Activated T-helper 2 cell treated with anti-CD3 and anti-CD28 coated beads, Interferon-gamma antibody, Interleukin-2, Interleukin-4, amounts not matched to agents 10 μg/mL and 5 μg/mL and 100 μg/mL, durations not matched to agents 14 hours and 24 hours and 36 hours (primary cell): ENCODE measurements at regions of chr1 and their contacts with region 1.

Region 1: DNA sequence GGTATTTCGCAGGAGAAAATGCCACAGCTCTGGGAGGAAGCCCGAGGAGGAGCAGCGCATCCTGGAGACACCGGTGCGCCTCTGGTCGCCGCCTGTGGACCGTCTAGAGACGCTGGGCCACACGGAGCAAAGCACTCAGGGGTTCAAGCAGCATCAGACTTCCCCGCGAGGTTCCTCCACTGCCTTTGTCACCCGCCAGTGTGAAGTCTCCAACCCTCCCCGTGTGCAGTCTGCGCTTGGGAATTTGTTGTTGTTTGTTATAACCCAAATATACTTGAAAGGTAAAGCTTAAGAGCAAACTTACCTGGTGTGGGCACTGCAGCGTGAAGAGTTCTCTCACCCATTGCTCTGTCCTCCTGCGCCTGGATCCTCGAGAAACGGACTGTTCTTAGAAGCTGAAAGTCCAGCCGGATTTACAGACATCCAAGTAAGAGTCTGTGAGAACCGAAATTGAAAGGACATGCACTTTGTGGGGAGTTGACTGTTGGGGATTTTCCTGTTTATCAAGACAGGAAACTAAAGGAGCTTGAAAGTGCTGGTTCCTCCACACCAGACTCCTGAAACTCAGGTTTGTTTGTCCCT is at the start of gene GBP4:
- DNase-seq: peak; percentile 30
- H3K4me3 Mint-ChIP-seq: peak within 1 kb of the TSS; percentile 86
- H3K27ac Mint-ChIP-seq: peak within 1 kb of the TSS; percentile 93
- H3K4me1 Mint-ChIP-seq: peaks cover 79% of the 10 kb centered on the region
- H3K27me3 Mint-ChIP-seq: no peaks in the 10 kb centered on the region
- total RNA-seq, gene GBP4: 13.9 and 14.3 TPM in 2 replicates

Region 2: GRCh38 chr1:89047734-89048133 is 150.8 kb before region 1 on chr1:
- intact Hi-C with region 1: loop called (anchors 5 kb)
- DNase-seq: no peak
- H3K4me3 Mint-ChIP-seq: no peak overlapping the region
- H3K27ac Mint-ChIP-seq: no peak overlapping the region
- H3K4me1 Mint-ChIP-seq: peaks cover 6% of the 10 kb centered on the region
- H3K27me3 Mint-ChIP-seq: no peaks in the 10 kb centered on the region

Region 3: GRCh38 chr1:89125913-89126580 is 72.5 kb before region 1 on chr1 and contains the start of gene GBP2:
- intact Hi-C with region 1: loop called (anchors 1 kb)
- DNase-seq: no peak
- H3K4me3 Mint-ChIP-seq: peak within 1 kb of the TSS; percentile 97
- H3K27ac Mint-ChIP-seq: peak within 1 kb of the TSS; percentile 99
- H3K4me1 Mint-ChIP-seq: peaks cover 61% of the 10 kb centered on the region
- H3K27me3 Mint-ChIP-seq: no peaks in the 10 kb centered on the region
- total RNA-seq, gene GBP2: 71.9 and 74.1 TPM in 2 replicates

Region 4: DNA sequence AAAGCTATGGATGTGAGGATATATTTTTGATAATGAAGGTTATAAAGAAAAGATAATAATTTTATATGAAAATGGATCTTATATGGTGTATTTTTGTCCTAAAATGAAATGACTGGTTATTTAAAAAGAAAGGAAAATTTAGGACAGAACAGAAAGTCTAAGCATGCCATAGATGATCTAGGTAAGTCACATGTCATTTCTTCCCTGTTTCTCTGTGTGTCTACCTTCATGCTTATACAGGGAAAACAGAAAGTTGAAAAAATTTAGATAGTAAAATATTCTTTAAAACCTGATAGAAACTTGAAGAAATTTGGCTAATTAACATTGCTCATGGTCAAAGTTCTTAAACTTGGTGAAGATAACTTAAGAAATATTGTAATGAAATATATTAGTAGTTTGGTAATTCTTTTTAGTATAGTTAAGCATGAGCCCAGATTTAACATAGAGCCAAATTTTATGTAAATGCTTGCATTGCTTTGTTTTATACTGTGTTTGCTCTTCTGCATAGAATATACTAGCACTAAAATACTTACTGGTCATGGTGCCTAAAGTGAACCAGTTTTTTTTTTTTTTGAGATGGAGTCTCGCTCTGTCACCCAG is 12.6 kb after region 1 on chr1:
- intact Hi-C with region 1: no loop called
- DNase-seq: no peak
- H3K4me3 Mint-ChIP-seq: no peak overlapping the region
- H3K27ac Mint-ChIP-seq: no peak overlapping the region
- H3K4me1 Mint-ChIP-seq: peaks cover 2% of the 10 kb centered on the region
- H3K27me3 Mint-ChIP-seq: no peaks in the 10 kb centered on the region

Region 5: GRCh38 chr1:89259283-89259971 is 60.8 kb after region 1 on chr1:
- intact Hi-C with region 1: loop called (anchors 5 kb)
- DNase-seq: peak; percentile 35
- H3K4me3 Mint-ChIP-seq: peak overlapping the region; percentile 27
- H3K27ac Mint-ChIP-seq: peak overlapping the region; percentile 56
- H3K4me1 Mint-ChIP-seq: peaks cover 48% of the 10 kb centered on the region
- H3K27me3 Mint-ChIP-seq: no peaks in the 10 kb centered on the region

Region 6: DNA sequence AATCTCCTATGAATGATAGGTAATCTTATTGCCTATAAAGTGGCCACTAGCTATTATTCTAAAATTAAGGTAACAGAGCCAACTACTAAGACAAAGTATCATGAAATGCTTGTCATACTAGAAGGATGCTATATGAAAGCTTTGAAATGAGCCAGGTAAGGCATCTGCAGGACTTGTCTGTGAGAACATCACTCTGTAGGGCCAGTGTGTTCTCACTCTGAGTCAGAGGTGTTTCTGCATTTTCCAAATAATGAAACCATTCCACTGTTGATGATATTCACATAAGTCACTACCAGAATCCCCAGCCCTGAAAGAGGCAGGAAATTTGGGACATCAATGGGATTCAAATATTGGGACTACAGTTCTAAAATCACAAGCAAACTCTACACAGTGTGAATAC is 99.9 kb after region 1 on chr1:
- intact Hi-C with region 1: loop called (anchors 1 kb)
- DNase-seq: no peak
- H3K4me3 Mint-ChIP-seq: no peak overlapping the region
- H3K27ac Mint-ChIP-seq: no peak overlapping the region
- H3K4me1 Mint-ChIP-seq: peaks cover 59% of the 10 kb centered on the region
- H3K27me3 Mint-ChIP-seq: peaks cover 1% of the 10 kb centered on the region

Region 7: DNA sequence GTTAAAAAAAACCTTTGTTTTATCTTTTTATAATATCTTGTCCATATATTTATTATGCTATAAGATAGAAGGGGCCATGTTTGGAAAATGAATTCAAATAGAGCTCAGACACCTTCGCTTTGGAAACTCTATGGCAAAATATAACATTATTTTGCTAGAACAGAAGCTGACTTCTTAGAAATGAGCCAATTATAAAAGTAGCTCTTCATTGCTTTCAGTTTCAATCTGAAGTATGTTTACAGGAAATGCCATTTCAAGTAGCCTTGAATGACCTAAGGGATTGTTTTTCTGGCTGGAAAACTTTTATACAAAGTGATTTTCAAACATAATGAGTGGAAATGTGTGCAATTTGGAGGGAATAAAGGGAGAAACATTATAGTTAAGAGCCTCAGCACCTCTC is 111.9 kb after region 1 on chr1:
- intact Hi-C with region 1: loop called (anchors 5 kb)
- DNase-seq: no peak
- H3K4me3 Mint-ChIP-seq: no peak overlapping the region
- H3K27ac Mint-ChIP-seq: peak overlapping the region; percentile 79
- H3K4me1 Mint-ChIP-seq: peaks cover 41% of the 10 kb centered on the region
- H3K27me3 Mint-ChIP-seq: no peaks in the 10 kb centered on the region